Activated CD4-positive, alpha-beta T cell treated with anti-CD3 and anti-CD28 coated beads for 36 hours (primary cell): ENCODE measurements at regions of chr2 and their contacts with region 1.

Region 1: DNA sequence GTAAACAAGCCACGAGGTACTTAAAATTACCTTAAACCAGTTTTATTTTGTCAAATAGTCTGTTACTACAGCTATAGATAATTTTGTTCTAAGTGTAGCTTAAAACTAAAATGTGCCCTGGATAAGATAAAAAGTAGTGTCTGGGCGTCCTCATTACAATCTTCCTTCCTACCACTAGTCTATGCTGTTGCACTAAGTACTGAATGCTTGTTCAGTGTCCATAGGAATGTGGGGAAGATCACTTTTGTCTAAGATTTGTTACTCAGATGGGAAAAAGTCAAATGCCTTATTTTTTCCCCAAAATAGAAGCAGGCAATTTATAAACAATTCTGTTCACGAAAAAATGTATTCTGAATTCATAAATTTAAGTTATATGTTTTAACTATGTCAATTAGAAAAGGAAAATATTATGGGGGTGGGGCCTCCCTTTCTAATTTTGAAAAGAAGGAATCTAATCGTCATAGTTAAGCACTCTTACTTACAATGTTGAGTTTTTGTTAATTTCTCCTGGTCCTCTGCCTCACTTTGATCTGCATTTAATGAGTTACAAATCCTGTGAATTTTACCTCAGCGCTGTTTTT is 140.4 kb upstream of the VRK2 start:
- DNase-seq: no peak
- ATAC-seq: peak; percentile 84
- H3K4me3 Mint-ChIP-seq: no peak overlapping the region
- H3K27ac Mint-ChIP-seq: no peak overlapping the region
- H3K4me1 Mint-ChIP-seq: peaks cover 9% of the 10 kb centered on the region
- H3K27me3 Mint-ChIP-seq: no peaks in the 10 kb centered on the region

Region 2: GRCh38 chr2:57821088-57821487 is 85.2 kb before region 1 on chr2:
- CTCF ChIA-PET with region 1: no interaction called
- POLR2A ChIA-PET with region 1: no interaction called
- intact Hi-C with region 1: no loop called
- DNase-seq: no peak
- ATAC-seq: no peak
- H3K4me3 Mint-ChIP-seq: no peak overlapping the region
- H3K27ac Mint-ChIP-seq: no peak overlapping the region
- H3K4me1 Mint-ChIP-seq: no peaks in the 10 kb centered on the region
- H3K27me3 Mint-ChIP-seq: no peaks in the 10 kb centered on the region

Region 3: DNA sequence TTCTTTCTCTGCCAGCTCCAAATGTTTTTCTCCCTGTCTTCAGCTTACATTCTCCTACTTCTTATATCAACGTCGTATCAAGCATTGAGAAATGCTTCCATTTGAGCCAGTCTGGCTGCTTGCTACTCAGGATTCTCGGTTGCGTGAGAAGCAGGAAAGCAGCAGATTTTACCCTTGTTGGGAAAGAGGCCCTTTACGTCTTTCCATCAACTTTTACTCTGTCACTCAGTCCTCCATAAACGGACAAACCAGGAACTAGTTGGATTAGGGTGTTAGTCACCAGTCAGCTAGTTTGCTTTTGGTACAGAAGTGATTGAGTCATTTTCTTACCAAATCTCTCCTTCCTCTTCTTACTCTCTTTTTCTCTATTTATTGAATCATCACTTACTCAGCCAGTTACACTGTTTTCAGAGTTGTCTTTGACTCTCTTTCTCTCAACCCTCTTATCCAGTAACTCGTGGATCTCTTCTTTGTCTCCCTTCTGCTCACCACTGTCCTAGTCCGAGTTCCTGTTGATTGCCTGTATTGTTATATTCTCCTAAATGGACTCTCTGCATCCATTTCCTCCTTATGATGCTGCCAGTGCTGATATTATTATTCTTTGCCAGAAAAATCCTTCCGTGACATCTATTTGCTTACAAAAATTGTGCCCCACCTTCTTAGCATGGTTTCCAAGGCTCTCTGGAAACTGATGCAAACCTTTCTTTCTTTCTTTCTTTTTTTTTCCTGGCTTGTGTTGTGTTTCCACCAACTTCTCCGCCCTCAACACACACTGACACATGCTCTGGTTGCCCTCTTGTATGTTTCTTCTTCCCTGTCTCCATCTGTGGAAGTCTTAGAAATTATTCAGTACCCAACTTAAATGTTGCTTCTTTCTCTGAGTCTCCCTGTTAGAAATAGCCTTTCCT is 201.8 kb after region 1 on chr2:
- CTCF ChIA-PET with region 1: no interaction called
- POLR2A ChIA-PET with region 1: no interaction called
- intact Hi-C with region 1: loop called in 1 of 2 experiments (anchors 10 kb)
- DNase-seq: no peak
- ATAC-seq: peak; percentile 95
- H3K4me3 Mint-ChIP-seq: no peak overlapping the region
- H3K27ac Mint-ChIP-seq: peak overlapping the region; percentile 45
- H3K4me1 Mint-ChIP-seq: peaks cover 18% of the 10 kb centered on the region
- H3K27me3 Mint-ChIP-seq: no peaks in the 10 kb centered on the region

Region 4: DNA sequence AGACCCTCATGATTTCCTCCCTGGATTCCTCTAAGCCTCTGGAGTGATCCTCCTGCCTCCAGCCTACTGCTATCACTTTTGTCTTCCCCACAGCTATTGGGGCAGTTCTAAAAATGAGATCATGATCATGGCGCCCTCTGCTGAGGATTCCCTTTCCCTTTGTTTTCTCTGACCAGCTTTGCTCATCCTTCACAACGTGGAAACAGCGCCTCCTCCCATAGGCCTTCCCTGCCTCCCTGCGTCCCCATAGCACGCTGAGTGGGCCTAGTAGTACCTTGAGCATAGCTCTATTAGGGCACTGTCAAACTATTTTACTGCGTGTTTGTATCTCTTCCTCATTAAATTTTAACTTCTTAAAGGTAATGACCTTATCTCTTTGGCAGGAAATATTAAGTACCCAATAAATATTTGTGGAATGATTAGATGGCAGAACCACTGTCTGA is 541.8 kb after region 1 on chr2:
- CTCF ChIA-PET with region 1: interaction called, 4 read pairs
- POLR2A ChIA-PET with region 1: no interaction called
- intact Hi-C with region 1: loop called (anchors 1 to 2 kb)
- DNase-seq: peak; percentile 51
- ATAC-seq: no peak
- H3K4me3 Mint-ChIP-seq: no peak overlapping the region
- H3K27ac Mint-ChIP-seq: no peak overlapping the region
- H3K4me1 Mint-ChIP-seq: no peaks in the 10 kb centered on the region
- H3K27me3 Mint-ChIP-seq: peaks cover 6% of the 10 kb centered on the region

Region 5: GRCh38 chr2:58571181-58571852 is 665.1 kb after region 1 on chr2:
- CTCF ChIA-PET with region 1: interaction called, 3 read pairs
- POLR2A ChIA-PET with region 1: no interaction called
- intact Hi-C with region 1: loop called in 1 of 2 experiments (anchors 5 kb)
- DNase-seq: peak; percentile 22
- ATAC-seq: peak; percentile 66
- H3K4me3 Mint-ChIP-seq: no peak overlapping the region
- H3K27ac Mint-ChIP-seq: no peak overlapping the region
- H3K4me1 Mint-ChIP-seq: peaks cover 2% of the 10 kb centered on the region
- H3K27me3 Mint-ChIP-seq: no peaks in the 10 kb centered on the region